Endothelial cell of umbilical vein (primary cell): ENCODE measurements at regions of chr3 and their contacts with region 1.

Region 1: DNA sequence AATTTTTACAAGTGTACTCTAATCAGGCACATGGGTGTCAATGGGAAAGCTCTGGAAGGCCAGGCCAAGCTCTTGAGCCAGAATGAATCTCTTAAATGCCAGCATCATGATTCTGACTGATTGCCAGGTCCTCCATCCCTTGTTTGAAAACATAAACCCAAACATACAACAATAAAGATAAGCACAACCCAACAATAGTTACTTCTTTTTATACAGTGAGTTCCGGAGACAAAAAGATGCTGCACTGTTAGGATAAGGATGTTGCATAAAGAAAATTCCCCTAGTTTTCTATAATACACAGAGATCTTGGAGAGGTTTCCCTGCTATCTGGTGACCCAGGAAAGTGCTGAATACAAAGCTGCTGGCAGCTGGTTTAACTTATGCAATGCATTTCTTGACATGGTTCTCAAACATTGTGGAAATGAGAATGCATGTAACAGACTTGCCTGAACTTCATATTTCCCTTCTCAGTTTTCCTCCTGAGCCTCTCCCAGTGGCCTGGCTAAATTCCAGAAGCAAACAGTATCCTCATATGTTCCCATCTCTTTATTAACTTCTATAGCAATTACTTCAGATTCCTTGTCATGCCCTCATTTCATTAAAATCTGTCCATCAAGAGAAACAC is 180.1 kb upstream of the PRICKLE2 start:
- DNase-seq: no peak
- H3K4me3 ChIP-seq: no peak overlapping the region
- H3K27ac ChIP-seq: no peak overlapping the region
- H3K4me1 ChIP-seq: no peaks in the 10 kb centered on the region
- H3K27me3 ChIP-seq: peaks cover 2 to 4% of the 10 kb centered on the region in 2 experiments
- CTCF ChIP-seq: no peak
- POLR2A ChIP-seq: no peak

Region 2: GRCh38 chr3:64163755-64164148 is 241.6 kb before region 1 on chr3:
- CTCF ChIA-PET with region 1: no interaction called
- POLR2A ChIA-PET with region 1: no interaction called
- dilution Hi-C with region 1: no loop called
- intact Hi-C with region 1: loop called (anchors 10 kb)
- DNase-seq: no peak
- H3K4me3 ChIP-seq: no peak overlapping the region
- H3K27ac ChIP-seq: no peak overlapping the region
- H3K4me1 ChIP-seq: no peaks in the 10 kb centered on the region
- H3K27me3 ChIP-seq: no peaks in the 10 kb centered on the region
- CTCF ChIP-seq: no peak
- POLR2A ChIP-seq: no peak

Region 3: DNA sequence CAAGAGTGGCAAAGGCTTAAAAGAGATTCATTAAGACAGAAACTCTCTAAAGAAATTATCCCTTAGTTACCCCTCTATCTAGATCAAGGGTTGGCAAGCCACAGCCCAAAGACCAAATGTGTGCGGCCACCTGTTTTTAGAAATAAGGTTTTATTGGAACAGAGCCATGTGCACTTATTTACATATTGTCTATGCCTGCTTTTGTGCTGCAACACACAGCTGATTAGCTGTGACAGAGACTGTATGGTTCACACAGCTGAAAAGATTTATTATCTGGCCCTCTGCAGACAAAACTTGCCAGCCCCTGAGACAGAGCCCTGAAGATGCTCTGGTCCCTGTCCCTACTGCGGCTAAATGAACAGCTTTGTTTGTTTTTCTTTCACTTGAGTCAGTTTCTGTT is 194.3 kb after region 1 on chr3:
- CTCF ChIA-PET with region 1: no interaction called
- POLR2A ChIA-PET with region 1: no interaction called
- dilution Hi-C with region 1: no loop called
- intact Hi-C with region 1: no loop called
- DNase-seq: no peak
- H3K4me3 ChIP-seq: no peak overlapping the region
- H3K27ac ChIP-seq: no peak overlapping the region
- H3K4me1 ChIP-seq: peaks cover 3% of the 10 kb centered on the region
- H3K27me3 ChIP-seq: no peaks in the 10 kb centered on the region
- CTCF ChIP-seq: no peak
- POLR2A ChIP-seq: no peak